ENCODE measurements at regions of chr5 and their contacts with region 1.

Region 1: GRCh38 chr5:41270423-41271251 is 57.3 kb upstream of the C6 start:
- DNase-seq: peak in 5 of 10 donors; percentile 32 to 69 (median 62)
- H3K4me3 ChIP-seq: peak overlapping the region in 14 of 59 donors; percentile 1 to 28 (median 20)
- H3K27ac ChIP-seq: no peak overlapping the region
- H3K27me3 ChIP-seq: no peaks in the 10 kb centered on the region
- CTCF ChIP-seq: peak; percentile 41 to 90 (median 78)

Region 2: DNA sequence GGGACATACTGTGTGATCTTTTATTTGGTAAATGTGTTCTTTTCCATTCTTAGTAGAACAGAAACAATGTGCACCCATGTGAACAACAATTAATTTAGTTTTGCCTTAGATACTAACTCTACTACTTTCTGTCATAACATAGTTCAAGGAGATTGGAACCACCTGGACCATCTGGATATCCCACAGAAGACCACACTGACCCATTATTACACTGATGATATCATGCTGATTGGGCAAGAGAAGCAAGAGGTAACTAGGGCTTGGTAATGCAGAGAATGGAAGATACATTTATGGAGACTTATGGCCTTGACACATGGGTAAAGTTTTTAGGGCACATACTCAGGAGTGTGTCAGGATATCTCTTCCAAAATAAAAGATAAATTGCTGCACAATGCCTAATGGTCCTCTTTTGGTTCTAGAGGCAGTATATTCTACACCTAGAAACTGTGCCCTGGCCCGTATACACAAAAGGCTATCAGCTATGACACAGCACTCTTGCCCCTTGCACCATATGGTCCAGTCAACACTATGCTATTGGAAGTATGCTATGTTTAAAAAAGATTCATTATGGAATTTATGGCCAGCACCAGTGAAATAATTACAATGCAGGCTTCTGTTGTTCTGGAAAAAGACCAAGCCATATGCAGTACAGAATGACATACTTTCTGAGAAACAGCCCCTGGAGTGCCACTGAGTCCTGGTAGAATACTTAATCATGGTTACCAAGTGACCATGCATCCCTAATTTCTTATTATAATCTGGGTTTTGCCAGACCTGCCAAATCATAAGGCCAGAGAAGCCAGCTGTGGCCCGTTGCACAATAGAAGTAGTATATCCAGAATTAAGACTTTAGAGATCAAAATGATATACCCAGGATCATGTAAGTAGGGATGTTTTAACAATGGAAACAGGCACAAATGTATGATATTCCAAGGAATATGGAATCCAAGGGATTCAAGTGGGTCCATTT is 157.9 kb before region 1 on chr5:
- intact Hi-C with region 1: no loop called
- DNase-seq: no peak
- H3K4me3 ChIP-seq: no peak overlapping the region
- H3K27ac ChIP-seq: no peak overlapping the region
- H3K27me3 ChIP-seq: no peaks in the 10 kb centered on the region
- CTCF ChIP-seq: no peak

Region 3: DNA sequence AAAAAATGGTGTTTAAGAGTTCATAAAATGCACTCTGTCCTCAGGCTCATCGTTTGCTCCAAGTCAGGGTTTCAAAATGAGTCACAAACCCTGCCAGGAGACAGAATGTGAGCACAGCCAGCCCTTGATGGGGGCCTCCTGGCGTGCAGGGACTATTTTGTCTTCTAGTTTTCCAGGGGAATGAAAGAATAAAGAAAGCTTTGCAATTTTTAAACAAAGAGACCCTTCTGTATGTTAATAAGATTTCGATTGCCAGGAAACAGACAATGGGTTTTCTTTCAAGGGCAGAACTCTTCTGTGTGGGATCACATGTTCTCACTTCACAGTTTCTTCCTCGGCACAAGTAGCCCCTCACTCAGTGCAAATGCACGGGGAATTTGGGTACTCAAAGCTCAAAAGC is 64.1 kb after region 1 on chr5:
- intact Hi-C with region 1: loop called in 1 of 2 experiments (anchors 5 kb)
- DNase-seq: peak in 9 of 10 donors; percentile 7 to 61 (median 45)
- H3K4me3 ChIP-seq: peak overlapping the region in 26 of 59 donors; percentile 0 to 46 (median 26)
- H3K27ac ChIP-seq: peak overlapping the region in 31 of 59 donors; percentile 1 to 80 (median 33)
- H3K27me3 ChIP-seq: no peaks in the 10 kb centered on the region
- CTCF ChIP-seq: peak in 5 of 56 donors; percentile 11 to 26 (median 14)

Region 4: DNA sequence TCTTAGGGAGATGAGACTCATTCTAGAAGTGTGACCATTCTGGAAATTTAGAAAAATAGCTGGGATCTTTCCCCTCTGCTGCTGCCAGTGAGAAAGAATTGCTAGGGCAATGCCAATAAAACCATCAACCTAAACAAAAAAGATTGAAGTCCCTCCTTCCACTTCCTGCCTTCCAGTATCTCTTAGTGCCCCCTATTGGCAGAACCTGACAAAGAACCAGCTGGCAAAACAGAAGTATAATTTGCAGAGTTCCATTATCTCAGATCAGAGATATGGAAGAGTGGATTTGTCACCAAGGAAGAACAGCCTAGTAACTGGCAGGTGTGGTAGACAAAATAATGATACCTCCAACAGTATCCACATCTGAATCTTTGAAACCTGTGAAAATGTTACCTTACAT is 253.5 kb after region 1 on chr5:
- intact Hi-C with region 1: loop called in 1 of 2 experiments (anchors 5 kb)
- DNase-seq: no peak
- H3K4me3 ChIP-seq: no peak overlapping the region
- H3K27ac ChIP-seq: no peak overlapping the region
- H3K27me3 ChIP-seq: peaks cover 0 to 3% (median 0%) of the 10 kb centered on the region in 45 donors
- CTCF ChIP-seq: peak in 35 of 56 donors; percentile 8 to 38 (median 24)

Region 5: GRCh38 chr5:41843456-41844370 is 573.1 kb after region 1 on chr5:
- intact Hi-C with region 1: loop called (anchors 2 to 10 kb)
- DNase-seq: peak in 2 of 10 donors; percentile 9 to 30
- H3K4me3 ChIP-seq: peak overlapping the region in 4 of 59 donors; percentile 4 to 37 (median 20)
- H3K27ac ChIP-seq: peak overlapping the region in 16 of 59 donors; percentile 5 to 64 (median 36)
- H3K27me3 ChIP-seq: no peaks in the 10 kb centered on the region
- CTCF ChIP-seq: peak; percentile 52 to 90 (median 81)